H1 (cell line): ENCODE measurements at regions of chr9 and their contacts with region 1.

Region 1: DNA sequence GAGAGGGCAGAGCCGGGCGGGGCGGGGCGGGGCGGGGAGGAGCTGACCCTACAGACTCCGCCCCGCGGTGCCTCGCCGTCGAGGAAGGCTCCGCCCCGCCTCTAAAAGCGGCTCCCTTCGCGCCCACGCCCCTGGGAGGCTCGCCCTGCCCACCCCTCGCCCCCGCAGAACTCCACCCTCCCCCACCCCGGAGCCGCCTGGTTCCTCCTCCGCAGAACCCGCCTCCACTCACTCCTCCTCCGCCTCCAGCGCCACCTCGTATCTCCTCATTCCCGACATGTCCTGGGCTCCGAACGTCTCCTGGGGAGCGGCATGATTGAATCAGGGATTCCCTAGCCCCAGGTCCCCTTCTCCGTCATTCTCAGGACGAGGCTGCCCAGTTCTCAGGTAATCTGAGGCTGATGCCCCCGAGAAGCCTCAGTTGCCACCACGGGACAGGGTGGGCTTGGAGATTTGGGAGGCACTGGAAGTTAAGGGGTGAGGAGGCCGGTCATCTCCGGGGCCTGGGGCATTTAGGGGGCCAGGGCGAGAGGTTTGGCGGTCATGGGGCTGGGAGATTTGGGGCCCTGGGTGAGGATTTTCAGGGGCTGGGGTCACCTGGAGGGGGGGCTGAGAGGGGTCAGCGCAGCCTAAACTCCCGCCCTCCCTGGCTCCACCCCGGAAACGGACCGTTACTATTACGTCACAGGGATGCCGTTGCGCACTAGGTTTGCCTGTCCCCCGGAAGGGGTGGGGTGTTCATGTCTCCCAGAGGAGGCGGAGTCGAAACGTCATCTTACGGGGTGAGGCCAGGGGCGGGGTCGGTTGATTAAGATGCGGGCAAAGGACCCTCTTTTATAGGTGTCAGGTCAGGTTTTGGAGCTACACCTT is 3.2 kb upstream of the CCL27 start:
- DNase-seq: peak; percentile 80 to 95
- H3K4me3 ChIP-seq: peak overlapping the region; percentile 59 to 92 (median 81)
- H3K27ac ChIP-seq: peak overlapping the region; percentile 88
- H3K4me1 ChIP-seq: peaks cover 0 to 4% (median 2%) of the 10 kb centered on the region in 4 experiments; a peak in 2 of 7 replicates
- H3K27me3 ChIP-seq: peaks cover 0 to 5% (median 0%) of the 10 kb centered on the region in 4 experiments; a peak in 2 of 7 replicates
- CTCF ChIP-seq: 0 out of 4 replicates have a peak, but pooled peaks of 1 of the 3 experiments have one; percentile 5
- EP300 ChIP-seq: no peak
- POLR2A ChIP-seq: peak in 1 of 2 experiments; percentile 83; a peak in 2 of 3 replicates
- RAD21 ChIP-seq: no peak

Region 2: GRCh38 chr9:34646211-34647083 is 19.2 kb before region 1 on chr9 and contains the start of gene GALT:
- CTCF ChIA-PET with region 1: interaction called, 277 read pairs
- POLR2A ChIA-PET with region 1: interaction called, 92 read pairs
- DNase-seq: peak in 1 of 2 experiments; percentile 96
- H3K4me3 ChIP-seq: peak within 1 kb of the TSS; percentile 69 to 92 (median 80)
- H3K27ac ChIP-seq: peak within 1 kb of the TSS; percentile 66
- H3K4me1 ChIP-seq: peaks cover 3 to 21% (median 11%) of the 10 kb centered on the region in 4 experiments
- H3K27me3 ChIP-seq: no peaks in the 10 kb centered on the region; a peak in 1 of 7 replicates
- CTCF ChIP-seq: peak; percentile 67 to 89 (median 72)
- EP300 ChIP-seq: no peak
- POLR2A ChIP-seq: peak in 1 of 2 experiments; percentile 69; a peak in 2 of 3 replicates
- RAD21 ChIP-seq: peak in 1 of 2 experiments; percentile 29; a peak in 1 of 4 replicates
- total RNA-seq, gene GALT: 21.1 and 21.9 TPM in 2 replicates

Region 3: DNA sequence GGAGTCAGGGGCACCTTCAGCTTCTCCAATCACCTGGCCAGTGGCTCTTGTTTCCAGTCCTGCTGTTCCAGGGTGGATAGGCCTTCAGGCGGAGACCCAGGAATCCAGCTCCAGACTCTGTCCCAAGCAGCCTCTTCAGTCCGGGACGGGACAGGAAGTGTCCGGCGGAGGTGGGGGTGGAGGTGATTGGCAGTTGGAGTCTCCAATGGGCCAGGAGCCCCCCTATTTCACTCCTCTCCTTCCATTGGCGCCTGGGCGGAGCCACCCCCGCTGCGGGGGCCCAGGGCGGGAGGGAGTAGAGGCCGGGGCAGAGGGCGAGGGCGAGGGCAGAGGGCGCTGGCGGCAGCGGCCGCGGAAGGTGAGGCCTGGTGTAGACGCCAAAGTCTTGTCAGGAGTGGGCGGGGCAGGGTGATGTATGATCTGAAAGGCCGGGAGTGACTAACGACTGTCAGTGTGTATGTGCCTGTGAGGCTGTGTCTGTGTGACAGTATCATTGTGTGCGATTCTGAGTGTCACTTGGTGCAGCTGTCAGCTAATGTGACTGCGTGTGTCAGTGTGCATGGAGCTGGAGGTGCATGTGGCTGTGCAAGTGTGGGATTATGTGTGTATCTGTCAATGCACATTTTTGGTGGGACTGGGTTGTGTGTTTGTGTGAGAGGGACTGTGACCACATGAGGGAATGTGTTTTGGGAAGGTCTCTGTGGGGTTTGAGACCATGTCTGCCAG is 13.6 kb before region 1 on chr9 and contains the start of gene IL11RA:
- CTCF ChIA-PET with region 1: interaction called, 277 read pairs
- POLR2A ChIA-PET with region 1: interaction called, 92 read pairs
- DNase-seq: peak; percentile 81 to 94
- H3K4me3 ChIP-seq: peak within 1 kb of the TSS; percentile 48 to 65 (median 57)
- H3K27ac ChIP-seq: no peak within 1 kb of the TSS; the same call in 1 of the 2 replicates
- H3K4me1 ChIP-seq: peaks cover 6 to 30% (median 15%) of the 10 kb centered on the region in 4 experiments
- H3K27me3 ChIP-seq: no peaks in the 10 kb centered on the region; a peak in 1 of 7 replicates
- CTCF ChIP-seq: peak in 2 of 3 experiments; percentile 1 to 33; a peak in 2 of 4 replicates
- EP300 ChIP-seq: no peak
- POLR2A ChIP-seq: no peak
- RAD21 ChIP-seq: peak in 1 of 2 experiments; percentile 4; a peak in 1 of 4 replicates
- total RNA-seq, gene IL11RA: 5.1 and 5.5 TPM in 2 replicates

Region 4: DNA sequence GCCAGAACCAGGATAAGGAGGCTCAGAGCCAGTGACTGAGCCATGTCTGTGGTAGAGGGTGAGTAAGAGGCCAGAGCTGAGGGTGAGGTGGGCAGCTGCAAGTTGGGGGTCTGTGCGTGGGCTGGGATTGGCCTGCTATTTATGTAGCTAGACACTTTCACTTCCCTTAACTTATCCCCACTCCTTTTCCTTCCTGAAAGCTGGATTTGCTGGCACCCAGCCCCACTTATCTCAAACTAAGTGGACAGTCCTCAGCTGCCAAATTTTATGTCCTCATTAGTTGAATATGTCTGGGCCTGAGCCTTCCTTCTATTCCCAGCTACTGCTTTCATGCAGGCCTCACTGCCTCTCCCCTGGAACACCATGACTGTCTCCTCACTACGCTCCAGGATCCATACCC is 44.4 kb after region 1 on chr9 and contains the start of gene CCL21:
- CTCF ChIA-PET with region 1: no interaction called
- POLR2A ChIA-PET with region 1: no interaction called
- DNase-seq: no peak
- H3K4me3 ChIP-seq: no peak within 1 kb of the TSS
- H3K27ac ChIP-seq: no peak within 1 kb of the TSS
- H3K4me1 ChIP-seq: no peaks in the 10 kb centered on the region
- H3K27me3 ChIP-seq: no peaks in the 10 kb centered on the region; a peak in 3 of 7 replicates
- CTCF ChIP-seq: no peak
- EP300 ChIP-seq: no peak
- POLR2A ChIP-seq: no peak
- RAD21 ChIP-seq: no peak
- total RNA-seq, gene CCL21: not detected in 2 replicates